B cell (primary cell): ENCODE measurements at regions of chr5 and their contacts with region 1.

Region 1: DNA sequence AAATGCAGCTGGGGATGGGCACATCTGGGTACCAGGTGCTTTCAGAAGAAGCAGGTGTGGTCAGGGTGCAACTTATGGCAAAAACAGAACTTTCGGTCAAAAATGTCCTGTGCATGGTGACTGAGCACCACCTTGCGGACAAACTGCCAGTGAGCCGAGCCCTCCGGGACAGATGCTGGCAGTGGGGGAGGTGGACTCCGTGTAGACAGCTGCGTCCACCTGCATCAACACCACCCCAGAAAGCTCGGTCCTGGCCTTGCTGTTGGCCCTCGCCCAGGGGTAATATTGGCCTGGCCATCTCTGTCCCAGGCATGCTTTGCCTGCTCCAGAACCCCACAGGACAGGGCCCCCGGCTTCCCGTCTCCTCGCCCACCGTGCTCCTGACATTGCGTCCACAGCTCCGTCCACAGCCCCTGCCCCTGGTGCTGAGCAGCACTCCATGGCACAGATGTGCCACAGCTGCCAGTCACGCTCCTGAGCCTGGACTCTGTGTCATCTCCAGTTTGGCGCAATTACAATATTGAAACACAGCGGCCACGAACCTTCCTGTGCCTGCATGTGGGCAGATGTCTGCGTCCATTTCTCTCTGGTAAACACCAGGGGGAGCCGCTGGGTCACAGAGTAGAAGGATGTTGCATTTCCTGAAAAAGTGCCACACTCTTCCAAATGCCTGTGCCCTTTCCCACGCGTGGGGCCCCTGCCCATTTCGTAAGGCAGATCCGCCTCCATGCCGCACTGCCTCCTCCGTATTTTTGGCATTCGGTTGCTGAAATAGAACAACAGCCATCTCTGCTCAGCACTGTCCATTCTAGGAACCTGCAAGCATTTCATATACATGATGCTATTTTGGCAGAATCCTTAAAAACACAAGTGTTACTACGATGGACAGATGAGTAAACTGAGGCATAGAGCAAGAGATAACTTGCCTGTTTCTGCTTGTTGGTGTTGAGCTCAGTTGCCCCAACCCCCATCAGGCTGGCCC is 33.4 kb upstream of the SLC6A19 start:
- DNase-seq: peak; percentile 83
- ATAC-seq: peak; percentile 79
- H3K4me3 ChIP-seq: peak overlapping the region in 3 of 5 experiments; percentile 33 to 43 (median 43)
- H3K4me3 Mint-ChIP-seq: peak overlapping the region; percentile 84
- H3K27ac ChIP-seq: no peak overlapping the region
- H3K27ac Mint-ChIP-seq: no peak overlapping the region
- H3K4me1 ChIP-seq: peaks cover 8 to 13% of the 10 kb centered on the region in 2 donors
- H3K4me1 Mint-ChIP-seq: peaks cover 13% of the 10 kb centered on the region
- H3K27me3 ChIP-seq: peaks cover 0 to 3% (median 0%) of the 10 kb centered on the region in 4 experiments
- H3K27me3 Mint-ChIP-seq: peaks cover 10% of the 10 kb centered on the region
- CTCF ChIP-seq: peak; percentile 80

Region 2: DNA sequence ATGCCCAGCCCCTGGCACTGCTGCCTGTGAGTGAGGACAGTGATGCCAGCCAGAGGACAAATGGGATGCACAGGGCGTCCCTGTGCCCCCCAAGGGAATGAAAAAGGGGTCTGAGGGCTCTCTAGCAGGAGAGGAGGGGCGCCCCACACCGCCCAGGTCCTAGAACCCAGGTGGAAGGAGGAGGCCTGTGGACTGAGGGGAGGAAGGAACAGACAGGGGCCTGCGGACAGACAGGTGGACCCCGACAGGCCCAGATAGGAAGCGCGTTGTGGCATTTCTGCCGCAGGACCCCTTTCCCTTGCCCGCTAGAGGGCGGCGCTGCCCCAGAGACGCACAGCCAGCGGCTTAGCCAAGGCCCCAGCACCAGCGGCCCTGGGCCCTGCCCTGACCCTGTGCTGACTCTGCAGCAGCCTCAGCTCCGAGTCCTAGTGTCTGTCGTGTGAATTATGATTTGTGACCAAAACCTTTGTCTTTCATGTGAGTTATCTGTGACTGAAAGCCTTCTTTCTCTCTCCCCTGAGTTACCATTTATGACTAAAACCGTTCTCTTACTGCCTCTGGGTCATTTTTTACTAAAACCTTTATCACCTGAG is 244.6 kb before region 1 on chr5:
- CTCF ChIA-PET with region 1: interaction called, 20 read pairs
- POLR2A ChIA-PET with region 1: no interaction called
- intact Hi-C with region 1: loop called (anchors 1 kb)
- DNase-seq: peak; percentile 73
- ATAC-seq: peak; percentile 80
- H3K4me3 ChIP-seq: no peak overlapping the region
- H3K4me3 Mint-ChIP-seq: no peak overlapping the region
- H3K27ac ChIP-seq: no peak overlapping the region
- H3K27ac Mint-ChIP-seq: no peak overlapping the region
- H3K4me1 ChIP-seq: peaks cover 10 to 15% of the 10 kb centered on the region in 2 donors
- H3K4me1 Mint-ChIP-seq: peaks cover 3% of the 10 kb centered on the region
- H3K27me3 ChIP-seq: peaks cover 0 to 20% (median 10%) of the 10 kb centered on the region in 4 experiments
- H3K27me3 Mint-ChIP-seq: peaks cover 27% of the 10 kb centered on the region
- CTCF ChIP-seq: peak; percentile 80

Region 3: DNA sequence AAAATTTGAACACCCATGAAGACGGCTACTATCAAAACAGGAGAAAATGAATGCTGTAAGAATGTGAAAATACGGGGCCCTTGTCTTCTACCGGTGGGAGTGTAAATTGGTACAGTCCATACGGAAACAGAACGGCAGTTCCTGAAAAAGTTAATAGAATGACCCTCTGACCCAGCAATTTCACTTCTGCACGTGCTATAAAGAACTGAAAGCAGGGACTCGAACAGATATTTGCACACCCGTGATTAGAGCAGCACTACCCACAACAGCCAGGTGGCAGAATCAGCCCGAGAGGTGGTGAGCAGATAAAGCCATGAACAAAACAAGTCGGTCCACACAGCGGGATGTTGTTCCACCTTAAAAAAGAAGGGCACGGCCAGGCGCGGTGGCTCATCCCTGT is 33.5 kb before region 1 on chr5:
- CTCF ChIA-PET with region 1: interaction called, 62 read pairs
- POLR2A ChIA-PET with region 1: no interaction called
- intact Hi-C with region 1: loop called (anchors 1 kb)
- DNase-seq: peak; percentile 83
- ATAC-seq: peak; percentile 80
- H3K4me3 ChIP-seq: no peak overlapping the region
- H3K4me3 Mint-ChIP-seq: peak overlapping the region; percentile 58
- H3K27ac ChIP-seq: no peak overlapping the region
- H3K27ac Mint-ChIP-seq: peak overlapping the region; percentile 38
- H3K4me1 ChIP-seq: peaks cover 34 to 50% of the 10 kb centered on the region in 2 donors
- H3K4me1 Mint-ChIP-seq: peaks cover 43% of the 10 kb centered on the region
- H3K27me3 ChIP-seq: peaks cover 0 to 7% (median 3%) of the 10 kb centered on the region in 4 experiments
- H3K27me3 Mint-ChIP-seq: peaks cover 15% of the 10 kb centered on the region
- CTCF ChIP-seq: peak; percentile 53

Region 4: DNA sequence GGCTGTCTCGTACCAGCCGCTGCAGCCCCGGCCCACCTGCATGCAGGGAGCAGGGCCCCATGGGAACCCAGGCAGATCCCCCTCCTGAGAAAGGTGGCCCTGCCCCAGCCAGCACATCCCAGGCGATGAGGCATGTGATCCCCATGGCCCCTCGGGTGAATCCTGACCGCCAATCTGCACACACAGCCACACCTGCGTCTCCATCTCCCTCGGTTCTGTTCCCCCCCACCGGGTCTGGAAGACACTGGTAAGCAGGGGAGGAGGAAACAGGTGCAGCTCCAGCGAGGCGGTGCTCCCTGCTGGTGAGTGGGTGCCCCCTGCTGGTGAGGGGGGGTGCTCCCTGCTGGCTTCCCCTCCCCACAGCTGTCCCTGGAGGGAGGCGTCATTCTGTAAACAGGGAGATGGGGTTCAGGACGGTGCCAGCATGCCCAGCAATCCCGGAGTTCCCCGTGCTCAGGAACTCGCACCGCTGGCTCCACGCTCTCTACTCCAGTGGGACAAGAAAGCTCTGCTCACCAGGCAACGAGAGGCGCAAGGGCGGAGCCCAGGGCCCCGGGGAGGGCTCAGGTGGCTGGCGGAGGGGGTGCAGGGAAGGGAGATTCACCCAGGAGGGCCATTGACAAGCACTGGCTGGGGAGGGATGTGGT is 27.7 kb before region 1 on chr5:
- CTCF ChIA-PET with region 1: interaction called, 62 read pairs
- POLR2A ChIA-PET with region 1: no interaction called
- intact Hi-C with region 1: no loop called
- DNase-seq: peak; percentile 82
- ATAC-seq: peak; percentile 86
- H3K4me3 ChIP-seq: peak overlapping the region in 1 of 5 experiments; percentile 12
- H3K4me3 Mint-ChIP-seq: peak overlapping the region; percentile 78
- H3K27ac ChIP-seq: no peak overlapping the region
- H3K27ac Mint-ChIP-seq: peak overlapping the region; percentile 42
- H3K4me1 ChIP-seq: peaks cover 26 to 41% of the 10 kb centered on the region in 2 donors
- H3K4me1 Mint-ChIP-seq: peaks cover 29% of the 10 kb centered on the region
- H3K27me3 ChIP-seq: peaks cover 0 to 8% (median 2%) of the 10 kb centered on the region in 4 experiments
- H3K27me3 Mint-ChIP-seq: peaks cover 18% of the 10 kb centered on the region
- CTCF ChIP-seq: peak; percentile 70

Region 5: DNA sequence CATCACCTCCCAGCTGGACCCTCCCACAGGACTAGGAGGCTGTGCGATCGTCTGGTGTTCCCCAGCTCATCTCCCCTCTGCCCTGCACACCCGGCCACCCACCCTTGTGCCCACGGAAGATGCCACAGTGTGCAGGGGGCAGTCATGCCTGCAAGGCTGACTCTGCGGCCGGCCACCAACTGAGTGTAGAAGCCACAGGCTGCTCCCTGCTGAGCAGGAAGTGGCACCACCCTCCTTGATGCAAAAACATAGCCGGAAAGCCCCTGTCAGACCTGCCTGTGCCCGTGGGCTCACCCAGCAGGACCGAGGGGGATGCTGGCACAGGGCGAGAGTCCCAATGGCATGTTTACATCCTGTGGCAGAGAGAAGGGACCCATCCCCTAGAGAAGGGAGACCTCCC is 15.9 kb before region 1 on chr5:
- CTCF ChIA-PET with region 1: interaction called, 10 read pairs
- POLR2A ChIA-PET with region 1: interaction called, 4 read pairs
- intact Hi-C with region 1: no loop called
- DNase-seq: peak; percentile 73
- ATAC-seq: peak; percentile 83
- H3K4me3 ChIP-seq: peak overlapping the region in 2 of 5 experiments; percentile 20 to 42
- H3K4me3 Mint-ChIP-seq: peak overlapping the region; percentile 77
- H3K27ac ChIP-seq: peak overlapping the region; percentile 68 to 71
- H3K27ac Mint-ChIP-seq: peak overlapping the region; percentile 89
- H3K4me1 ChIP-seq: peaks cover 48 to 53% of the 10 kb centered on the region in 2 donors
- H3K4me1 Mint-ChIP-seq: peaks cover 41% of the 10 kb centered on the region
- H3K27me3 ChIP-seq: peaks cover 0 to 31% (median 8%) of the 10 kb centered on the region in 4 experiments
- H3K27me3 Mint-ChIP-seq: peaks cover 16% of the 10 kb centered on the region
- CTCF ChIP-seq: no peak